GM12878 (cell line): ENCODE measurements at regions of chr12 and their contacts with region 1.

Region 1: DNA sequence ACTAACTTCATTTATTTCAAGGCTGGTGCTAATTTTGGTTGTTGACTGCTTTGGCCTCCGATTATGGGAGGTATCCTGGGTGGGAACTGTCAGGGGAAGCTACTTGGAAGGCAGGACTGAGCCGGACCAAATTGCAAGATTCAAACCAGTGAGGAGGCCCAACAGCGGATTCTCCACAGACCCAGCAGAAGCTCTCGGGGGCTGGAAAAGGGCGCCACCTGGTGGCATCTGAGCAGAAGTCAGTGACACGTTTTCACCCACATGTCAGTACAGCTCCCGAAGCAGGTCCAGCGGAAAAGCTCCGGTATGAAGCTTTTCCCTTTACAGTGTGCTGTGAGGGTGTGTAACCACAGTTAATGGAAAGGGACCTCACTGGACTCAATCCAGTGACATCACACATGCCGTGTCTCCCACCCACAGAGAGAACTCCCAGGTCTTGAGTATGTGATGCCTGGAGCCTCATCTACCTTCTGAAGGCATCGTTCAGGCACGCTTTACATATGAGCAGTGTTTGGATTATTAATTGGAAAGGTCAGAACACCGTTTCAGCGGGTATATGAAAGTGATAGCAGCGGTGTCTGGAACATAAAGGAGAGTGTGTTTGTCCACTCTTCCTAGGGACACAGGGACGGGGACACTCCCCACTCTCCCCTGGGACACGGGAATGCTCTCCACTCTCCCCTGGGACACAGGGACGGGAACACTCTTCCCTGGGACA is 3.6 kb upstream of the P2RX2 start:
- DNase-seq: peak; percentile 26
- ATAC-seq: peak; percentile 97
- H3K4me3 ChIP-seq: no peak overlapping the region
- H3K27ac ChIP-seq: no peak overlapping the region
- H3K4me1 ChIP-seq: no peaks in the 10 kb centered on the region
- H3K27me3 ChIP-seq: peaks cover 0 to under 1% of the 10 kb centered on the region in 2 experiments; a peak in 1 of 4 replicates
- CTCF ChIP-seq: peak; percentile 84 to 88 (median 88)
- EP300 ChIP-seq: no peak
- POLR2A ChIP-seq: no peak
- RAD21 ChIP-seq: peak; percentile 82

Region 2: GRCh38 chr12:132600048-132601032 is 14.7 kb before region 1 on chr12:
- CTCF ChIA-PET with region 1: interaction called, 15 read pairs
- POLR2A ChIA-PET with region 1: interaction called, 3 read pairs
- RAD21 ChIA-PET with region 1: interaction called, 3 read pairs
- SMC1A ChIA-PET with region 1: interaction called, 3 read pairs
- in situ Hi-C with region 1: no loop called
- intact Hi-C with region 1: no loop called
- DNase-seq: no peak
- ATAC-seq: peak; percentile 88
- H3K4me3 ChIP-seq: 0 out of 2 replicates have a peak overlapping the region, but pooled peaks have one; percentile 27
- H3K27ac ChIP-seq: no peak overlapping the region
- H3K4me1 ChIP-seq: no peaks in the 10 kb centered on the region
- H3K27me3 ChIP-seq: no peaks in the 10 kb centered on the region; a peak in 1 of 4 replicates
- CTCF ChIP-seq: peak; percentile 29 to 70 (median 60)
- EP300 ChIP-seq: no peak
- POLR2A ChIP-seq: no peak
- RAD21 ChIP-seq: peak; percentile 20; the same call in 1 of the 2 replicates

Region 3: GRCh38 chr12:132651444-132652100 is 36.6 kb after region 1 on chr12:
- CTCF ChIA-PET with region 1: no interaction called
- POLR2A ChIA-PET with region 1: no interaction called
- RAD21 ChIA-PET with region 1: no interaction called
- SMC1A ChIA-PET with region 1: no interaction called
- in situ Hi-C with region 1: no loop called
- intact Hi-C with region 1: no loop called
- DNase-seq: no peak
- ATAC-seq: no peak
- H3K4me3 ChIP-seq: no peak overlapping the region
- H3K27ac ChIP-seq: no peak overlapping the region
- H3K4me1 ChIP-seq: no peaks in the 10 kb centered on the region
- H3K27me3 ChIP-seq: no peaks in the 10 kb centered on the region
- CTCF ChIP-seq: no peak
- EP300 ChIP-seq: no peak
- POLR2A ChIP-seq: no peak
- RAD21 ChIP-seq: no peak